Right ventricle myocardium inferior (tissue), 1 donor: ENCODE measurements at regions of chr20 and their contacts with region 1.

Region 1: DNA sequence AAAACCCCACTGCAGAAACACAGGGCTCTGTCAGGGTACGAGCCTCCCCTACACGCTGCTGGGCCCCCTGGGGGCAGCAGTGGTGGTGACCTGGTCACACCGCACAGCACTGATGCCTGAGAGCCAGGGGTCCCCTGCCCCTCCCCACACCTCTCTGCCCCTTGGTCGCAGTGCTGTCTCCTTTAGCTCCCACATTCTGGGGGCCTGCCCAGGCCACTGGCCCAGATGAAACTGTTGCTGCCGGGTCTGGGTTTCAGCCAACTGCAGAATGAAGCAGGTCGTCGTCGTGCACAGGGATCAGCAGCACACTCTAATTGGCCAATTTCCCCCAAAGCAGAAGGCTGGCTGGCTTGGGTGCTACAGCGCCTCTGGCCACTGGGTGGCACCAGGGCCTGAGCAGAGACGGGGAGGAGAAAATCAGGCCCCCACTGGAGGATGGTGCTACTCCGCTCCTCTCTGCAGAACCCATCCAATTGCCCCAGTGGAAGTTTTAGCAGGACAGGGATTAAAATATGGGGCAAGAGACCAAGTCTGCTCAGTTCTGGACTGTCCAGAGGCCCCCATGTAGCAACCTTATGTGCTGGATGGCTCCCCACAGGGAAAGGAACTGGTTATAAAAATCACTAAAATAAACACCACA is 26.1 kb downstream of the DIDO1 start:
- DNase-seq: peak; percentile 86
- ATAC-seq: peak; percentile 92

Region 2: DNA sequence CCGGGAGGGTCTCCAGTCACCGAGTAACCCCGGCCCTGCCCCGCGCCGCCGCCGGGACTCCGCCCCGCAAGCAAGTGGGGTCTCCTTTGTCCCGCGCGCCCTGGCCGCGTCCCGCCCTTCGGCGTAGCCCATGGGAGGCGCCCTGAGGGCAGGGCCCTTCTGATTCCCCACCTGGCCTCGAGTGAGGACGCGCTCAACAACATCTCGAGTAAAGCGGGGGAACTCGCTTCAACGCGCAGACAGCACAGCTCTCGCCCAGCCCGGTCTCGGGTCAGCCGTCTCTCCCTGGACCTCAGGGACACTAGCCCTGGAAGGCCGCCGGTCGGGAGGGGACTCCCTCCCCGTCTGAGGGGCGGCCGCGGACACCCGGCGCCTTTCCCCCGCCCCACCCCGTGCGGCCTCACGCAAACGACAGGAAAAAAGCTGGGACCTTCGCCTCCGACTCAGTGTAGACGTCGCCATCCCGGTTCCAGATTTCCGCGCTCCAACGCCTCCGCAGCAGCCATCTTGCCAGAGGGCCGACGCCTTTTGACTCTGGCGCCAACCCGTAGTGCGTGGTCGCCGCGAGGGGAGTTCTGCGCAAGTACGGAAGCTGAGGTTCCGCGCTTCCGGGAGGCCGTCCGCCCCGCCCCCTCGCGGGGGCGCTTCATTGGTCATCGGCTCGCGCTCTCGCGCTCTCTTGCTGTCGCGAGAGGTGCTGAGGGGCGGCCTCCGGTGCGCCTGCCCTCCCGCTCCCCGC is 37.4 kb after region 1 on chr20:
- intact Hi-C with region 1: loop called (anchors 5 kb)
- DNase-seq: peak; percentile 98
- ATAC-seq: peak; percentile 96

Region 3: GRCh38 chr20:62980970-62981369 is 80.8 kb after region 1 on chr20:
- intact Hi-C with region 1: no loop called
- DNase-seq: no peak
- ATAC-seq: no peak